ENCODE measurements at regions of chr1 and their contacts with region 1.

Region 1: DNA sequence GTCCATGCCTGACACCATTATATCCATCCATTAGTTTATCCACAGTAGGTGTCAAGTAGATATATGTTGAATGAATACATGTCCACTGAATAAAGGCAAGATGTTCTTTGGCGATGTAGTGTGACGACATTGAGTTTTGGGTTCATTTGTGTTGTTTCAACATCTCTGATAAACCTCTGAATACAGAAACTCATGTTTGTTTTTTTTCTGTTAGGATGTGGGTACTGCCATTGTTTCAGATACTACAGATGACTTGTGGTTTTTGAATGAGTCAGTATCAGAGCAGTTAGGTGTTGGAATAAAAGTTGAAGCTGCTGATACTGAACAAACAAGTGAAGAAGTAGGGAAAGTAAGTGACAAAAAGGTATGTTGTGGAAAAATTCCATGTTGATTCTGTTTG is 28.1 kb downstream of the MDM4 start:
- DNase-seq: no peak

Region 2: GRCh38 chr1:204611036-204611435 is 66.7 kb after region 1 on chr1:
- intact Hi-C with region 1: loop called in 1 of 2 experiments (anchors 2 kb)
- DNase-seq: no peak